CD14-positive monocyte (primary cell): ENCODE measurements at regions of chr12 and their contacts with region 1.

Region 1: DNA sequence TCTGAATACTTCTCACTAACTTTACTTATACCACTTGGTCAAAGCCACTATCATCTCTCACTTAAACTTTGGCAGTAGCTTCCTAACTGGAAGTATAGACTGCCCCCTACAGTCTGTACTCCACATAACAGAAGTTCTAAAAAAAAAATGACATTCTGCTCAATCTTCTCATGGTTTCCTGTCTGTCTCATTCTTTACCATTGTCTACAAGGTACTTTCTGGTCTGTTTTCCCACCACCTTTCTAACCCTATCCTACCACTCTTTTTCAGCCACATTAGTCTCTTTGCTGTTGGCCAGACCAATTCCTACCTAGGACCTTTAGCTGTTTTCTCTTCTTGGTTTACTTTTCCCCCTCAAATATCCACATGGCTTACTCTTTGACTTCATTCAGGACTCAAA is 14.7 kb downstream of the CPSF6 start:
- DNase-seq: peak; percentile 42 to 60 (median 51)
- H3K4me3 ChIP-seq: no peak overlapping the region
- H3K4me3 Mint-ChIP-seq: no peak overlapping the region
- H3K27ac ChIP-seq: peak overlapping the region in 1 of 2 donors; percentile 34
- H3K27ac Mint-ChIP-seq: peak overlapping the region in 6 of 7 donors; percentile 18 to 77 (median 58)
- H3K4me1 ChIP-seq: peaks cover 16 to 17% of the 10 kb centered on the region in 2 donors
- H3K4me1 Mint-ChIP-seq: peaks cover 42% of the 10 kb centered on the region
- H3K27me3 ChIP-seq: no peaks in the 10 kb centered on the region
- H3K27me3 Mint-ChIP-seq: no peaks in the 10 kb centered on the region
- CTCF ChIP-seq: peak; percentile 85

Region 2: DNA sequence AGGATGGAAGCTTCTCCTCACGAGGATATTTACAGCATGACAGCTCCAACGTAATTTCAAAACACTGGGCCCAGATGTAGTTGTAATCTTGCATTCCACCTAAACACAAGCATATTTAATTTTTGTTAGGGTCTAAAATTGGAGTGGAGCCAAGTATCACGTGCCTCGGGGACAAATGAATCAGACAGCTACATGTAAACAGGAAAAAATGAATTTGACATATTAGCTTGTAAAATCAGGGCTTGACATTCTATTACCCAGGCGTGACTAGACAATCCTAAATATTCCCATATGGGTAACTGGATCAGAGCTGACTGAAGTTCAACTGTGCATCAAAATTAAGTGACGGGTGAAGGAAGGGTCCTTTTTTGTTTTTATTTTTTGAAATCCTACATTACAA is 387.1 kb before region 1 on chr12:
- intact Hi-C with region 1: loop called (anchors 5 to 10 kb)
- DNase-seq: no peak
- H3K4me3 ChIP-seq: no peak overlapping the region
- H3K4me3 Mint-ChIP-seq: no peak overlapping the region
- H3K27ac ChIP-seq: no peak overlapping the region
- H3K27ac Mint-ChIP-seq: no peak overlapping the region
- H3K4me1 ChIP-seq: no peaks in the 10 kb centered on the region
- H3K4me1 Mint-ChIP-seq: no peaks in the 10 kb centered on the region
- H3K27me3 ChIP-seq: no peaks in the 10 kb centered on the region
- H3K27me3 Mint-ChIP-seq: no peaks in the 10 kb centered on the region
- CTCF ChIP-seq: no peak

Region 3: DNA sequence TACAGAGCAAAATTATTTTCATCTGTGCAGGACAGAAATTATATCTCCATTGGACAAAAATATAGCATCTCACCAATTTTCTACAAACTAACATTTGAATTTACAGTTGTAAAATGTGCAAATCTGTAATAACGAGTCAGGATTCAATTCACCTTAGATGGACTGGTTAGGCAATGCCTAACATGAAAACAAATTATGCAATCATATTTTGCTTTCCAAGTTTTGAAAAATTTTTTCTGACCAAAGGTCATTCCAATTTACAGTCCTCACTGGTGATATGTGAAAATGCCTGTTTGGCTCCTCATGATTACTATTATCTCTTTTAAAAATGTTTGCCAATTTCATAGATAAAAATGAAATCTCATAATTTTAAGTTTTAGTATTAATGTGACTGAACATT is 314.5 kb before region 1 on chr12:
- intact Hi-C with region 1: no loop called
- DNase-seq: no peak
- H3K4me3 ChIP-seq: no peak overlapping the region
- H3K4me3 Mint-ChIP-seq: no peak overlapping the region
- H3K27ac ChIP-seq: no peak overlapping the region
- H3K27ac Mint-ChIP-seq: no peak overlapping the region
- H3K4me1 ChIP-seq: no peaks in the 10 kb centered on the region
- H3K4me1 Mint-ChIP-seq: peaks cover 3% of the 10 kb centered on the region
- H3K27me3 ChIP-seq: peaks cover 0 to 4% of the 10 kb centered on the region in 2 donors
- H3K27me3 Mint-ChIP-seq: peaks cover 8 to 11% (median 10%) of the 10 kb centered on the region in 3 donors
- CTCF ChIP-seq: no peak

Region 4: DNA sequence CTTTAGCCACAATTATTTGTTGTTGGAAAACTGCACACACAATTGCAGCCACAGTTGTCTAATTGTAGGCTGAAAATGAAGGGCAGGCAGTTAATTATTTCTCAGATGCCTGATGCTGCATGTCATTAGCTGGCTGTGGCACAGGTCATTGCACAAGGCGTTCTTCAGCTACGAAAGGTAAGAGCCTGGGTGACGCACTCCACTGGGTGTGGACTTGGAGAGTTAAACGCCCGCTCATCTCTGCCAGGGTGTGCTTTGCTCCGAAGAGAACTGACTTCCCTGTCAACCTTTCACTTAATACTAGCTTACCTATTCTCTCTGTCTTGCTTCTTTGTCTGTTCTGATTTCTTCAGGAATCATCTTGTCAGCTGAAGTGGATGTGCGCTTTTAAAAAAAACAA is 229.6 kb before region 1 on chr12:
- intact Hi-C with region 1: no loop called
- DNase-seq: no peak
- H3K4me3 ChIP-seq: no peak overlapping the region
- H3K4me3 Mint-ChIP-seq: no peak overlapping the region
- H3K27ac ChIP-seq: no peak overlapping the region
- H3K27ac Mint-ChIP-seq: no peak overlapping the region
- H3K4me1 ChIP-seq: peaks cover 20% of the 10 kb centered on the region in 2 donors
- H3K4me1 Mint-ChIP-seq: peaks cover 25% of the 10 kb centered on the region
- H3K27me3 ChIP-seq: no peaks in the 10 kb centered on the region
- H3K27me3 Mint-ChIP-seq: peaks cover 0 to 2% (median 0%) of the 10 kb centered on the region in 3 donors
- CTCF ChIP-seq: no peak

Region 5: DNA sequence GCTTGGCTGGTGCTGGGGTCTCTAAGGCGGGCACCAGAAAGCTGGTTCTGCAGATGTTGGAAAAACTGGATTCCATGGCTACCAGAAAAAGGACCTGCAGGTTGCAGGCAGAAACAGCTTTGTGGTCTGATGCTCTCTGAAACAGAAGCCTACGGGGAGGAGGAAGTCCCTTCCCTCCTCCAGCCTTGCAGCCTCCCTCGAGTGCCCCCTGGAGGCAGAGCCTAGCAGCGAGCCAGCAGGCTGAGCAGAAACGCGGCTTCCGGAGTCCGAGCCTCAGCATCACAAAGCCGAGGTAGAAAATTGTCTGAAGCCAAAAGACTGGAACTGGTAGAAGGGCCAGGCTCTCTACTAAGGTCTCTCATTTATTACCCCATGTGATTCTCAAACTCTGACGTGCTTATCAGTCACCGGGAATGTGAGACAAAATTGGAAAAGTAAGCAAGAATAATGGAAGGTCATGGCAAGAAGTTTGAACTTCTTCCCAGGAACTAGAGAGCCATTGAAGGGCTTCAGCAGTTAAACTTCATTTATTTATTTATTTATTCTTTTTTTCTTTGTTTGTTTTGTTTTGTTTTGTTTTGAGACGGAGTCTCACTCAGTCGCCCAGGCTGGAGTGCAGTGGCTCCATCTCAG is 96.9 kb before region 1 on chr12:
- intact Hi-C with region 1: loop called (anchors 5 to 10 kb)
- DNase-seq: peak; percentile 76 to 81 (median 77)
- H3K4me3 ChIP-seq: peak overlapping the region in 1 of 3 experiments; percentile 52
- H3K4me3 Mint-ChIP-seq: peak overlapping the region; percentile 63 to 66
- H3K27ac ChIP-seq: no peak overlapping the region
- H3K27ac Mint-ChIP-seq: peak overlapping the region in 1 of 7 donors; percentile 63
- H3K4me1 ChIP-seq: peaks cover 4 to 6% of the 10 kb centered on the region in 2 donors
- H3K4me1 Mint-ChIP-seq: peaks cover 14% of the 10 kb centered on the region
- H3K27me3 ChIP-seq: no peaks in the 10 kb centered on the region
- H3K27me3 Mint-ChIP-seq: peaks cover 2 to 6% (median 2%) of the 10 kb centered on the region in 3 donors
- CTCF ChIP-seq: peak; percentile 95